Mammary epithelial cell (primary cell): ENCODE measurements at regions of chr12 and their contacts with region 1.

Region 1: DNA sequence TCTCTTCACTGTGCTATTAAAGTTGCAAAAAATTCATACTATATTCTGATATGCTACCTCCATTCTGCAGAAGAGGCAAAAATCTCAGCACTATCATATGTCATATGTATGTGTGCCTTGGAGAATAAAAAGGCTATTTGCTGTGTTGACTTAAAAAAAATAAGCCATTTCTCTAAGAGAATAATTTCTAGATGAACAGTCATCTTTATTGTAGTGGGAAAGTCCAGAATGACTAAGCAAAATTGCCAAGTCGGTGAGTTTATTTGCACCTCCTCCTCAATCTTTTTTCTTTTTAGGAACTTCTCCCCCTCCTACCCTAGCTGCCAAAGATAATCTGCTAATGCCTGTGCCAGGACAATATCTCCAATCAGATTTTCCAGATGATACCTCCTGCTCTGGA is 353.8 kb upstream of the FAR2 start:
- DNase-seq: peak; percentile 60
- H3K4me3 ChIP-seq: no peak overlapping the region
- H3K27ac ChIP-seq: no peak overlapping the region
- H3K4me1 ChIP-seq: no peaks in the 10 kb centered on the region
- H3K27me3 ChIP-seq: no peaks in the 10 kb centered on the region
- CTCF ChIP-seq: no peak

Region 2: DNA sequence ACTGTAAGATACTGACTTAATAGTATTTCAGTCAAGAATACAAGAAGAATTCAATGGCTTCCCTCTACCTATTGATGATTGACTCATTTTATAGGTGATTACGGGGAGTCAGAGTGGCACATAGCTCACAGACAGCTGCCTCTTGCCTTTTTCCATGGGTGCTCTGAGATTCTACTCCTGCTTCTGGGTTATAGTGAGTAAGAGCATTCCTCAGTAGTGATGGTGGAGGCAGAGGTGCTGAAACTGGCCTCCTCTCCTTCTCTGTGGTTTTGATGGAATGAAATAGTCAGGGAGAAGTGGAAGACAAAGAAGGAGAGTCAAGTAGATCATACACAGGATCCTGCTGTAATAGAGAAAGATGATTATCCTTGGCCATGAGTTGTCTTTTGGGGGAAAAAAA is 84.4 kb before region 1 on chr12:
- CTCF ChIA-PET with region 1: no interaction called
- dilution Hi-C with region 1: loop called (anchors 5 kb)
- in situ Hi-C with region 1: no loop called
- intact Hi-C with region 1: no loop called
- DNase-seq: peak; percentile 91
- H3K4me3 ChIP-seq: no peak overlapping the region
- H3K27ac ChIP-seq: no peak overlapping the region
- H3K4me1 ChIP-seq: no peaks in the 10 kb centered on the region
- H3K27me3 ChIP-seq: no peaks in the 10 kb centered on the region
- CTCF ChIP-seq: no peak

Region 3: DNA sequence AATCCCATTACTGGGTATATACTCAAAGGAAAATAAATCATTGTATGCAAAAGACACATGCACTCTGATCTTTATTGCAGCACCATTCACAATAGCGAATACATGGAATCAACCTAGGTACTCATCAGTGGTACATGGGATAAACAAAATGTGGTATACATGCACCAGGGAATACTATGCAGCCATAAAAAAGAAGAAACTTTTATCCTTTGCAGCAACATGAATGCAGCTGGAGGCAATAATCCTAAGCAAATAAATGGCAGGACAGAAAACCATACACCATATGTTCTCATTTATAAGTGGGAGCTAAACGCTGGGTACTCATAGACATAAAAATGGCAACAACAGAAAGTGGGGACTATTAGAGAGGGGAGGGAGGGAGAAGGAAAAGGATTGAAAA is 569.8 kb after region 1 on chr12:
- CTCF ChIA-PET with region 1: no interaction called
- dilution Hi-C with region 1: no loop called
- in situ Hi-C with region 1: no loop called
- intact Hi-C with region 1: no loop called
- DNase-seq: no peak
- H3K4me3 ChIP-seq: no peak overlapping the region
- H3K27ac ChIP-seq: no peak overlapping the region
- H3K4me1 ChIP-seq: no peaks in the 10 kb centered on the region
- H3K27me3 ChIP-seq: no peaks in the 10 kb centered on the region
- CTCF ChIP-seq: no peak